ENCODE measurements at regions of chr5 and their contacts with region 1.

Region 1: DNA sequence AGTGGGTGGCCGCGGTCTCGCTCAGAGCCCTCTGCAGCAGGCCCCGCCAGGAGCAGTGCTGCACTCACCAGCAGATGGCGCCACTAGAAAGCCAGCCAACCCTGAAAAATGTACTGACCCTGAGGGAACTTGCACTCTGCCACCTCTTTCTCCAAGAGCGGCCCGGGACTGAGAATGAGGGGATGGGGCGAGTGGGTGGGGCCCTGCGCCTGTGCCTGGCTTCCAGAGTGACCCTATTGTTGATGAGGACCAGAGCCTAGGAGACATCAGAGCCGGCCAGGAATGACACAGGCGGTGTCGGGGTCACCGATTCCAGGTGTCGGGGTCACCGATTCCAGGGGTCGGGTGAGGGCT is 2.9 kb upstream of the IL17B start:
- DNase-seq: peak; percentile 86
- H3K4me3 ChIP-seq: no peak overlapping the region
- H3K27ac ChIP-seq: peak overlapping the region; percentile 78 to 91
- H3K4me1 ChIP-seq: peaks cover 80% of the 10 kb centered on the region
- H3K27me3 ChIP-seq: no peaks in the 10 kb centered on the region
- CTCF ChIP-seq: peak; percentile 94 to 96 (median 96)
- POLR2A ChIP-seq: no peak

Region 2: GRCh38 chr5:149416987-149417710 is 35.2 kb after region 1 on chr5:
- intact Hi-C with region 1: loop called (anchors 5 kb)
- DNase-seq: no peak
- H3K4me3 ChIP-seq: no peak overlapping the region
- H3K27ac ChIP-seq: peak overlapping the region; percentile 31 to 95
- H3K4me1 ChIP-seq: peaks cover 60% of the 10 kb centered on the region
- H3K27me3 ChIP-seq: no peaks in the 10 kb centered on the region
- CTCF ChIP-seq: no peak
- POLR2A ChIP-seq: no peak

Region 3: DNA sequence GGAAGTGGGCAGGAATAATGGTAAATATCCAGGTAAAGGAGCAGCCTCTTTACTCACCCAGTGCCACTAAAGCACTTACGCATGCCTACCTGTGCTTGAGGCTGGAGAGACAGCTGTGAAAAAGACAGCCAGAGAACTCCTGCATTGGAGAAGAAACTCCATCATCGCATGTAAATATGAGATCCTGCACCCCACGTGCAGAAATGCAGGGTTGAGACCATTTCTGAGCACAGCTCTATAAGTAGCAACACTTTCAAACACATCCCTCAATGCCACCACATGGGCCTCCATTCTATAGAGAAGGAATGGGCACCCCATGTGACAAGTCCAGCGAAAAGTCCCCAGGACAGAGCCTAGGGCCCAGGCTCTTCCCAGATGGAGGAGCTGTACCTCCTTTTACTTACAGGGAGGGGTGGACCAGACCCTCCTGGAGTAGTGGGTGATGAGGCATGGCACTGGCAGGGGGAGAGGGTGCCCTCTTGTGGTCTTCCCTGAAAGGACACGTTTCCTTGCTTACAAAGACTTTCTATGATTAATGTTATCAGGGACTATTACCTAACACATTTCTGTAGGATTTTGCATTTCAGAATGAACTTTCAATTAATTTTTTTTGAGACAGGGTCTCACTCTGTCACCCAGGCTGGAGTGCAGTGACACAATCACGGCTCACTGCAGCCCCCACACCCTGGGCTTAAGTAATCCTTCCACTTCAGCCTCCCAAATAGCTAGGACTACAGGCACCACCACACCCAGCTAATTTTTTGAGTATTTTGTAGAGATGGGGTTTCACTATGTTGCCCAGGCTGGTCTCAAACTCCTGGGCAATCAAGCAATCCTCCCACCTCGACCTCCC is 52.4 kb after region 1 on chr5:
- intact Hi-C with region 1: loop called (anchors 5 kb)
- DNase-seq: peak; percentile 87
- H3K4me3 ChIP-seq: no peak overlapping the region
- H3K27ac ChIP-seq: peak overlapping the region in 1 of 2 donors; percentile 80
- H3K4me1 ChIP-seq: peaks cover 16% of the 10 kb centered on the region
- H3K27me3 ChIP-seq: no peaks in the 10 kb centered on the region
- CTCF ChIP-seq: peak; percentile 52 to 85 (median 84)
- POLR2A ChIP-seq: no peak

Measured in testis (tissue), 5 donors.